HCT116 (cell line): ENCODE measurements at regions of chr10 and their contacts with region 1.

Region 1: GRCh38 chr10:119079632-119080520 is 741 bp downstream of the EIF3A start:
- DNase-seq: peak; percentile 43
- ATAC-seq: peak; percentile 72
- H3K4me3 ChIP-seq: peak overlapping the region; percentile 83 to 98
- H3K27ac ChIP-seq: peak overlapping the region; percentile 96
- H3K4me1 ChIP-seq: peaks cover 22 to 40% of the 10 kb centered on the region in 2 experiments
- H3K27me3 ChIP-seq: no peaks in the 10 kb centered on the region
- CTCF ChIP-seq: no peak
- POLR2A ChIP-seq: no peak
- RAD21 ChIP-seq: no peak

Region 2: DNA sequence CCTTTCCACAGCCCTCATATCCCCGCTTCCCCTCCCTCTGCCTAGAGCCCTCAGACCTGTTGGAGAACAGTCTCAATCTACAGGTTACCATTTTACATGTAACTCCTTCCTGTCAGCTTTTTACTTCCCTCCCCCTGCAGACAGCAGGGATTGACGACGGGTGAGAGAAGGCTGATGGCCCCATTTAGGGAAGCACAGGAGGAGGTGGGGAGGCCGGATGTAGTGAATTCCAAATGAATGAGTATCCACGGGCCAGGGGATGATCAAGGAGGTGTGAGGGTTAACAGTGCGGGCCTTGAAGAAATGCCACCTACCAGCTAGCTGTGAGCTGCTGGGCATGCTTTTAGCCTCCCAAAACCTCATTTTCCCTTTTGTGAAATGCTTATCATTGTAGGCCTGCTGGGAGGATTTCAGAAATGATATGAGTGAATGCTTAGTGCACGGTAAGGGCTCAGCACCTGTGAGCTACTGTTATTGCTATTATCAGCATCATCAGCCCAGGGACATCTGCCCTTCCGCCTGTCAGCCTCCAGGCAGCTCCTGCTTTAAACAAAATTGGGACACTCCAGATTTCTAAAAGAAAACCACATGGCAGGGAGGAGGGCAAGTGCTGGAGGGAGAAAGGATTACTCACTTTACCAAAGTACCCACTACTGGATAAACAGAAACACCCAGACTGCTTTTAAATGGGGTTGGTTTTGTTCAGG is 56.9 kb before region 1 on chr10:
- CTCF ChIA-PET with region 1: no interaction called
- POLR2A ChIA-PET with region 1: no interaction called
- RAD21 ChIA-PET with region 1: no interaction called
- intact Hi-C with region 1: no loop called
- DNase-seq: no peak
- ATAC-seq: peak; percentile 68
- H3K4me3 ChIP-seq: peak overlapping the region in 1 of 2 experiments; percentile 4; a peak in 1 of 4 replicates
- H3K27ac ChIP-seq: no peak overlapping the region
- H3K4me1 ChIP-seq: peaks cover 41 to 63% of the 10 kb centered on the region in 2 experiments
- H3K27me3 ChIP-seq: no peaks in the 10 kb centered on the region
- CTCF ChIP-seq: no peak
- POLR2A ChIP-seq: no peak
- RAD21 ChIP-seq: no peak

Region 3: GRCh38 chr10:119103903-119104652 is 24.2 kb after region 1 on chr10 and contains the start of gene DENND10:
- CTCF ChIA-PET with region 1: no interaction called
- POLR2A ChIA-PET with region 1: interaction called, 4 read pairs
- RAD21 ChIA-PET with region 1: no interaction called
- intact Hi-C with region 1: loop called (anchors 1 kb)
- DNase-seq: peak; percentile 73
- ATAC-seq: peak; percentile 87
- H3K4me3 ChIP-seq: peak within 1 kb of the TSS; percentile 82 to 90
- H3K27ac ChIP-seq: peak within 1 kb of the TSS; percentile 73
- H3K4me1 ChIP-seq: peaks cover 4 to 22% of the 10 kb centered on the region in 2 experiments
- H3K27me3 ChIP-seq: no peaks in the 10 kb centered on the region
- CTCF ChIP-seq: no peak
- POLR2A ChIP-seq: peak; percentile 97
- RAD21 ChIP-seq: no peak
- total RNA-seq, gene DENND10: 47.5 TPM

Region 4: GRCh38 chr10:120456626-120457430 is 1377.0 kb after region 1 on chr10 and contains the start of gene PLPP4:
- CTCF ChIA-PET with region 1: no interaction called
- POLR2A ChIA-PET with region 1: no interaction called
- RAD21 ChIA-PET with region 1: no interaction called
- intact Hi-C with region 1: no loop called
- DNase-seq: no peak
- ATAC-seq: no peak
- H3K4me3 ChIP-seq: no peak within 1 kb of the TSS
- H3K27ac ChIP-seq: no peak within 1 kb of the TSS
- H3K4me1 ChIP-seq: no peaks in the 10 kb centered on the region
- H3K27me3 ChIP-seq: peaks cover 25% of the 10 kb centered on the region
- CTCF ChIP-seq: no peak
- POLR2A ChIP-seq: no peak
- RAD21 ChIP-seq: no peak
- total RNA-seq, gene PLPP4: not detected